Activated T-helper 1 cell treated with anti-CD3 and anti-CD28 coated beads, Interleukin-12 subunit alpha, Interleukin-12 subunit beta, Interleukin-2, Interleukin-4 antibody, amounts not matched to agents 30 ng/mL and 10 ng/mL and 1 ng/mL, durations not matched to agents 14 hours and 24 hours and 36 hours (primary cell): ENCODE measurements at regions of chr9 and their contacts with region 1.

Region 1: GRCh38 chr9:841371-842209 is at the start of gene DMRT1:
- DNase-seq: no peak
- H3K4me3 Mint-ChIP-seq: no peak within 1 kb of the TSS
- H3K27ac Mint-ChIP-seq: no peak within 1 kb of the TSS
- H3K4me1 Mint-ChIP-seq: peaks cover 3% of the 10 kb centered on the region
- H3K27me3 Mint-ChIP-seq: peaks cover 41% of the 10 kb centered on the region
- total RNA-seq, gene DMRT1: not detected in 2 replicates

Region 2: GRCh38 chr9:971901-972500 is 130.4 kb after region 1 on chr9:
- intact Hi-C with region 1: loop called (anchors 2 kb)
- DNase-seq: no peak
- H3K4me3 Mint-ChIP-seq: no peak overlapping the region
- H3K27ac Mint-ChIP-seq: peak overlapping the region; percentile 48
- H3K4me1 Mint-ChIP-seq: peaks cover 21% of the 10 kb centered on the region
- H3K27me3 Mint-ChIP-seq: peaks cover 77% of the 10 kb centered on the region